ENCODE measurements at regions of chr14 and their contacts with region 1.

Region 1: GRCh38 chr14:31561155-31561846 is at the start of gene NUBPL:
- DNase-seq: peak; percentile 83 to 93
- ATAC-seq: peak; percentile 98 to 99
- H3K4me3 ChIP-seq: peak within 1 kb of the TSS; percentile 89 to 98 (median 96)
- H3K27ac ChIP-seq: peak within 1 kb of the TSS; percentile 86 to 90 (median 88)
- H3K4me1 ChIP-seq: peaks cover 5 to 10% of the 10 kb centered on the region in 2 donors
- H3K27me3 ChIP-seq: no peaks in the 10 kb centered on the region
- CTCF ChIP-seq: no peak
- POLR2A ChIP-seq: no peak
- total RNA-seq, gene NUBPL: 4.5 to 12.3 (median 7.7) TPM

Region 2: GRCh38 chr14:31456841-31457664 is 104.2 kb before region 1 on chr14 and contains the start of gene DTD2:
- in situ Hi-C with region 1: no loop called
- intact Hi-C with region 1: loop called (anchors 1 kb)
- DNase-seq: peak; percentile 89 to 93
- ATAC-seq: peak; percentile 97 to 98
- H3K4me3 ChIP-seq: peak within 1 kb of the TSS; percentile 68 to 79 (median 74)
- H3K27ac ChIP-seq: peak within 1 kb of the TSS; percentile 85 to 90 (median 89)
- H3K4me1 ChIP-seq: peaks cover 9 to 11% of the 10 kb centered on the region in 2 donors
- H3K27me3 ChIP-seq: no peaks in the 10 kb centered on the region
- CTCF ChIP-seq: no peak
- POLR2A ChIP-seq: peak; percentile 56 to 80
- total RNA-seq, gene DTD2: 4.0 to 7.8 (median 4.8) TPM

Measured in gastrocnemius medialis (tissue), 4 donors.